Activated naive CD4-positive, alpha-beta T cell treated with anti-CD3 and anti-CD28 coated beads for 36 hours (primary cell): ENCODE measurements at regions of chr10 and their contacts with region 1.

Region 1: DNA sequence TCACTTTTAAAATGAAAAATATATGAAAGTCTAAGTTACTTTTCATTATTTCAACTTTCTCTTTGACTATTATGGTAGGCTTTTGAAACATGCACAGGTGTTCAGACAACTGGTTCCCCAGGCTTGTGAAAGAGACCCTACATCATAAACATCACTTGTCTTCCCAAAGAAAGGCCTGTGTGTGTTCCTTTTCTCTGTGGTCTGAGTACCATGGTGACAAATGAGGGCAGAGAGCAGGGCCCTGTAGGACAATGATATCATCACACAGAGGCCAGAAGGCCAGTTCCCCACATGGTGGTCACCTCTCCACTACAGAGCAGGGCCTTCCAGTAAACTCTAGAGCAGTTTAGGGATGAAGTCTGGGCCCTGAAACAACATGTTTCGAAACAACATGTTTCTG is 288.8 kb downstream of the USP6NL start:
- DNase-seq: no peak
- H3K4me3 Mint-ChIP-seq: no peak overlapping the region
- H3K27ac Mint-ChIP-seq: peak overlapping the region; percentile 95
- H3K4me1 Mint-ChIP-seq: peaks cover 75% of the 10 kb centered on the region
- H3K27me3 Mint-ChIP-seq: no peaks in the 10 kb centered on the region

Region 2: DNA sequence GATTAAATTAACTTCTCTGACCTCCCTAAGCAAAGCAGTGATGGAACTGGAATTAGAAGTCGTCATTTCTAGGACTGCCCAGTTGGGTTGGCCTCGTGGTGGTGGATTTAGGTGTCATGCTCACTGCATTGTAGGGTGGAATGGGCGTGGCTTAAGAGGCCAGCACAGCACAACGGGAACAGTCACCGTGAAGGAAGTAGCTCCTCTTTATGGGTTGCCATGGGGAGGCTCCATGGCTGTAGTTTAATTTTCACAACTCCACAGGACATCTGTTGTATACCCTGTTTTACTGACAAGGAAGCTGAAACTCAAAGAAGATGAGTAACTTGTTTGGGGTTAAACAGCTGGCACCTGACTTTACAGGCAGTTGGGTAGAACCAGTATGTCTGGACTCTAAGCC is 96.8 kb before region 1 on chr10:
- CTCF ChIA-PET with region 1: no interaction called
- intact Hi-C with region 1: loop called (anchors 2 kb)
- DNase-seq: peak; percentile 88
- H3K4me3 Mint-ChIP-seq: peak overlapping the region; percentile 56
- H3K27ac Mint-ChIP-seq: peak overlapping the region; percentile 87
- H3K4me1 Mint-ChIP-seq: peaks cover 89% of the 10 kb centered on the region
- H3K27me3 Mint-ChIP-seq: no peaks in the 10 kb centered on the region

Region 3: DNA sequence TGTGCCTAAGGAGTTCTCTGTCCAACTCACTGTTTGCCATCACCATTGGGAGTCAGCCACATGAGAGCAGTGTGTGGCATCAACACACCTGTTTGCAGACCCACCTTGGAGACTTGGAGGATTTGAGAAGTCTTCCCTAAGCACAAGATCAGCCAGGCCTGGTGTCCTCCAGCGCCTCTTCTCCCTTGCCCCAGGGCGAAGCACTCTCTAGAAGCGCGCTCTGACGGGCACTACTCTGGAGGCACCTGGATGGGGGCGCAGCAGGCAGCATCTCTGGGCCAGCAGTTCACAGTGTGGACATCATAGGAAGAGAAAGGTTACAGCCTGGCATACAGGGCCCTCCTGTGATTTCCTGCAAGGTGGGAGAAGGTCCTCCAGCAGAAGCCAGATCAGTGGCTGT is 15.7 kb before region 1 on chr10:
- CTCF ChIA-PET with region 1: no interaction called
- intact Hi-C with region 1: loop called (anchors 1 kb)
- DNase-seq: no peak
- H3K4me3 Mint-ChIP-seq: no peak overlapping the region
- H3K27ac Mint-ChIP-seq: peak overlapping the region; percentile 31
- H3K4me1 Mint-ChIP-seq: peaks cover 36% of the 10 kb centered on the region
- H3K27me3 Mint-ChIP-seq: no peaks in the 10 kb centered on the region

Region 4: DNA sequence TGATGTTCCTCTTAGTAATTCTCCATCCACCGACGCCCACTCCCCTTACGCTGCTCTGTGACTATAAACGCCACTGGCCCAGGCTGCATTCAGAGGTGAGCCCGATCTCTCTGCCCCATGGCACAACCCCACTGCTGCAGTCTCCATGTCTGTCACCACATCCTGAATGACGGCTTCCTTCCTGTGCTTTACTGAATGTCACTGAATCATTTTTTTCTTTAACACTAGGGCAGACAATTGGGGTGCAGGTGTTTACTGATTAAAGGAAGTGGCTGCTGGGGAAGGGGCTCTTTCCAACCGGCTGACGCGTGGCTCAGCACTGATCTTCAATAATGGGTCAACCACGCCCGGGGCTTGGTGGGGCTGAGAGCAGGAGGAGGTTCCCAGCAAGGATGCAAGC is 80.4 kb after region 1 on chr10:
- CTCF ChIA-PET with region 1: no interaction called
- intact Hi-C with region 1: loop called (anchors 5 kb)
- DNase-seq: peak; percentile 83
- H3K4me3 Mint-ChIP-seq: peak overlapping the region; percentile 63
- H3K27ac Mint-ChIP-seq: peak overlapping the region; percentile 88
- H3K4me1 Mint-ChIP-seq: peaks cover 50% of the 10 kb centered on the region
- H3K27me3 Mint-ChIP-seq: no peaks in the 10 kb centered on the region

Region 5: GRCh38 chr10:11560076-11560709 is 237.5 kb after region 1 on chr10:
- CTCF ChIA-PET with region 1: no interaction called
- intact Hi-C with region 1: no loop called
- DNase-seq: no peak
- H3K4me3 Mint-ChIP-seq: no peak overlapping the region
- H3K27ac Mint-ChIP-seq: no peak overlapping the region
- H3K4me1 Mint-ChIP-seq: peaks cover 13% of the 10 kb centered on the region
- H3K27me3 Mint-ChIP-seq: no peaks in the 10 kb centered on the region